Activated T-helper 1 cell treated with anti-CD3 and anti-CD28 coated beads, Interleukin-12 subunit alpha, Interleukin-12 subunit beta, Interleukin-2, Interleukin-4 antibody, amounts not matched to agents 30 ng/mL and 10 ng/mL and 1 ng/mL, durations not matched to agents 14 hours and 24 hours and 36 hours (primary cell): ENCODE measurements at regions of chr9 and their contacts with region 1.

Region 1: GRCh38 chr9:15231788-15232635 is 75.0 kb downstream of the TTC39B start:
- DNase-seq: no peak
- H3K4me3 Mint-ChIP-seq: no peak overlapping the region
- H3K27ac Mint-ChIP-seq: peak overlapping the region; percentile 37
- H3K4me1 Mint-ChIP-seq: peaks cover 35% of the 10 kb centered on the region
- H3K27me3 Mint-ChIP-seq: no peaks in the 10 kb centered on the region

Region 2: GRCh38 chr9:14670718-14671117 is 561.3 kb before region 1 on chr9:
- intact Hi-C with region 1: loop called (anchors 5 kb)
- DNase-seq: no peak
- H3K4me3 Mint-ChIP-seq: no peak overlapping the region
- H3K27ac Mint-ChIP-seq: peak overlapping the region; percentile 27
- H3K4me1 Mint-ChIP-seq: peaks cover 11% of the 10 kb centered on the region
- H3K27me3 Mint-ChIP-seq: no peaks in the 10 kb centered on the region

Region 3: GRCh38 chr9:15211160-15211814 is 20.7 kb before region 1 on chr9:
- intact Hi-C with region 1: loop called (anchors 1 kb)
- DNase-seq: peak; percentile 47
- H3K4me3 Mint-ChIP-seq: no peak overlapping the region
- H3K27ac Mint-ChIP-seq: no peak overlapping the region
- H3K4me1 Mint-ChIP-seq: peaks cover 39% of the 10 kb centered on the region
- H3K27me3 Mint-ChIP-seq: no peaks in the 10 kb centered on the region

Region 4: DNA sequence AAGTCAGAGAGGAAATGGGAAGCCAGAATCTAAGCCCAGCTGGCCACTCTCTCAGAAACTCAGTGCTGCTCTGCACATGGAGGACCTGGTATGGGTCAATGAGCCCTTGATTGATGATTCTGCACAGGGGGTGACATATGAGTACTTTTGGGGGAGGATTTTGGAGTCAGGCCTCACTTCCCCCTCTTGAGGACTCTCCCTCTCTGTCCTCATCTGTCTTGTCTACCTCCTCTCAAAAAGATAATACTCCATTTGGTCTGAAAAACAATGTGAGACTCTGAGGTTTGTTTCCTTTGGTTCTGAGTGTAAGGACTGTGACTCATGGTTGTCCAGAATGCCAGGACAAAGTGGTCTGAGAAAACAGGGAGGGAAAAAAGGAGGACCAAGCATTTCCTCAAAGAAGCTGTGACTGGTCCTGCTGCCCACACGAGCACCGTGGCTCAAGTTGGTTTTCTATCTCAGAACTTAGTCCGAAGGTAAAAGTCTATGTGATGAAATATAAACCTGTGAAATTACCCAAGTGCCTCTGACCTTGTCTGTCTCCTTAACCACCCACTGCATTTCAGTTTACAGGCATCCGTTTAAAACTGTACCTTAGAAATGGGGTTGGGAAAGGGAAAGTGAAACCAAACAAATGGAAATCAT is 63.9 kb after region 1 on chr9:
- intact Hi-C with region 1: loop called (anchors 1 kb)
- DNase-seq: no peak
- H3K4me3 Mint-ChIP-seq: peak overlapping the region; percentile 79
- H3K27ac Mint-ChIP-seq: peak overlapping the region; percentile 97
- H3K4me1 Mint-ChIP-seq: peaks cover 84% of the 10 kb centered on the region
- H3K27me3 Mint-ChIP-seq: no peaks in the 10 kb centered on the region

Region 5: DNA sequence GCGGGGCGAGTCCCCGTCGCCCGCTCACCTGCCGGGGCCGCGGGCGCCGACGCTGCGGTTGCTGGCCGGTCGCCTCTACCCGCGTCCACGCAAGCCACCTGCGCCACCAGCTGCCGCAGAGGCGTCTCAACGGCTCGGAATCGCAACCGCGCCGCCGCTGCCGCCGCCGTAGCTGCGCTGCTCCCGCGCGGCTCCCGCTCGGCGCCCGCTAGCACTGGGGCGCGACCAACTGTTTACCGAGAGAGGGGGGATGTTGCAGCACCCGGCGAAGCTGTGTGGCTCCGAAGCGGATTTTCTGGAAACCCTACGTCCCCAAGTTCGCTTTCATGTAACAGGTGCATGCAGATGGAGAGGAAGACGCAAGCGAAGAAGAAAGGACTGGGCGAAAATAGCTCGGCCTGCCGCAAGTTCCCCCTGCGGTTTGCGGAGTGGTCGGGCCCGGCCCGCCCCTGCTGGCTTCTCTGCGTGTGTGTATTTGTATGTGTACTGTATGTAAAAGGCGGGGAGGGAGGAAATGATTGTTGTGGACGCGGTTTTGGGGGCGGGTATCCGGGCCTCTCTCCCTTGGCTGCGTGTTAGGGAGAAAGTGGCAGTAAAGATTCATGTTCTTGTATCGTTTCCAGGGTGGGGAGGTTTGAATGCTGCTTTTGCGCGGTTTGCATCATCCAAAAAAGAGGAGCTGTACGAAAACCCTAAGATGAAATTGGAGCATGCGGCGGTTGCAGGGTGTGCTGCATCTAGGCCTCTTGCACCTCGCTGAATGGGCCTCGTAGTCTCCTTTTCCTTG is 279.0 kb after region 1 on chr9 and contains the start of gene PSIP1:
- intact Hi-C with region 1: loop called (anchors 2 kb)
- DNase-seq: peak; percentile 84
- H3K4me3 Mint-ChIP-seq: peak within 1 kb of the TSS; percentile 96
- H3K27ac Mint-ChIP-seq: peak within 1 kb of the TSS; percentile 100
- H3K4me1 Mint-ChIP-seq: peaks cover 52% of the 10 kb centered on the region
- H3K27me3 Mint-ChIP-seq: peaks cover 4% of the 10 kb centered on the region
- total RNA-seq, gene PSIP1: 90.6 and 95.3 TPM in 2 replicates